ENCODE measurements at regions of chr20 and their contacts with region 1.

Region 1: GRCh38 chr20:44615169-44615791 is 32.9 kb downstream of the PKIG start:
- DNase-seq: no peak
- ATAC-seq: peak; percentile 7; the same call in 2 of the 3 replicates
- H3K4me3 ChIP-seq: no peak overlapping the region
- H3K27ac ChIP-seq: peak overlapping the region; percentile 43; the same call in 1 of the 2 replicates
- H3K4me1 ChIP-seq: peaks cover 21% of the 10 kb centered on the region
- H3K27me3 ChIP-seq: no peaks in the 10 kb centered on the region
- CTCF ChIP-seq: no peak
- EP300 ChIP-seq: no peak
- POLR2A ChIP-seq: no peak
- RAD21 ChIP-seq: no peak

Region 2: GRCh38 chr20:44642203-44643153 is 27.2 kb after region 1 on chr20:
- CTCF ChIA-PET with region 1: interaction called, 12 read pairs
- POLR2A ChIA-PET with region 1: interaction called, 4 read pairs
- RAD21 ChIA-PET with region 1: interaction called, 13 read pairs
- SMC1A ChIA-PET with region 1: interaction called, 17 read pairs
- in situ Hi-C with region 1: no loop called
- intact Hi-C with region 1: loop called (anchors 2 kb)
- DNase-seq: peak; percentile 77
- ATAC-seq: peak; percentile 65
- H3K4me3 ChIP-seq: peak overlapping the region; percentile 16; the same call in 1 of the 2 replicates
- H3K27ac ChIP-seq: peak overlapping the region; percentile 99
- H3K4me1 ChIP-seq: peaks cover 68% of the 10 kb centered on the region
- H3K27me3 ChIP-seq: no peaks in the 10 kb centered on the region
- CTCF ChIP-seq: peak; percentile 18 to 42 (median 22); a peak in 5 of 6 replicates
- EP300 ChIP-seq: peak in 1 of 2 experiments; percentile 17; a peak in 1 of 4 replicates
- POLR2A ChIP-seq: peak; percentile 51; the same call in 1 of the 2 replicates
- RAD21 ChIP-seq: 0 out of 2 replicates have a peak, but pooled peaks have one; percentile 17

Region 3: DNA sequence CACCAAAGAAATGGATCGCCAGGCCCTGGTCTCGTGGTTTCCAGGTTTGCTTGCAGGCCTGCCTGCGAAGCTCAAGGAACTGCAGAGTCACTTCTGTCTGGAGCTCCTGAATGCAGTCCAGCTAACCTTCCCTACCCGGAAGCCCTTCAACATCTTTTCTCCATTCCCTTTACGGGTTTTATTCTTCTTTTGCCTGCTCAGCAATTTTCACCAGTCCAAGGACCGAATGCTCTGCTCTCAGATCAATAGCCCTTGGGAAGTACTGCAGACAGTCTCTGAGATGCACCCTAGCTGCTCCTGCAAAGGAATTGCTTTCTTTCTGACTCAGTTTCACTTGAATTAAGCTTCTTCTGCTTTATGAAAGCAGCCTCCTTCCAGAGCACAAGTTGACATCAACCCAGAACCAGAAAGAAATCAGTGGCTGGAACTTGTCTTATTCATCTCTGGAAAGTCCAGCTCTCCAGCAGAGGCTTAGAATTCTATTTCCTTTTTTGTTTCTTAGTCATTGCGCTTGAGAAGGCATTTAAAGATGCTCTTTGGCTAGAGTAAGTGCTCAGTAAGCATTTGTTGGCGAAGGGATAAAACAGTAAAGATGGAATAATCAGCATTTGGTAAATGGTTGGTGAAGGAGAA is 251.5 kb after region 1 on chr20:
- CTCF ChIA-PET with region 1: no interaction called
- POLR2A ChIA-PET with region 1: no interaction called
- RAD21 ChIA-PET with region 1: no interaction called
- SMC1A ChIA-PET with region 1: no interaction called
- in situ Hi-C with region 1: no loop called
- intact Hi-C with region 1: no loop called
- DNase-seq: no peak
- ATAC-seq: peak; percentile 29; the same call in 2 of the 3 replicates
- H3K4me3 ChIP-seq: no peak overlapping the region
- H3K27ac ChIP-seq: no peak overlapping the region
- H3K4me1 ChIP-seq: peaks cover 4% of the 10 kb centered on the region
- H3K27me3 ChIP-seq: peaks cover 0 to 3% of the 10 kb centered on the region in 2 experiments; a peak in 1 of 4 replicates
- CTCF ChIP-seq: no peak
- EP300 ChIP-seq: no peak
- POLR2A ChIP-seq: no peak
- RAD21 ChIP-seq: no peak

Measured in GM12878 (cell line).